ENCODE measurements at regions of chr1 and their contacts with region 1.

Region 1: DNA sequence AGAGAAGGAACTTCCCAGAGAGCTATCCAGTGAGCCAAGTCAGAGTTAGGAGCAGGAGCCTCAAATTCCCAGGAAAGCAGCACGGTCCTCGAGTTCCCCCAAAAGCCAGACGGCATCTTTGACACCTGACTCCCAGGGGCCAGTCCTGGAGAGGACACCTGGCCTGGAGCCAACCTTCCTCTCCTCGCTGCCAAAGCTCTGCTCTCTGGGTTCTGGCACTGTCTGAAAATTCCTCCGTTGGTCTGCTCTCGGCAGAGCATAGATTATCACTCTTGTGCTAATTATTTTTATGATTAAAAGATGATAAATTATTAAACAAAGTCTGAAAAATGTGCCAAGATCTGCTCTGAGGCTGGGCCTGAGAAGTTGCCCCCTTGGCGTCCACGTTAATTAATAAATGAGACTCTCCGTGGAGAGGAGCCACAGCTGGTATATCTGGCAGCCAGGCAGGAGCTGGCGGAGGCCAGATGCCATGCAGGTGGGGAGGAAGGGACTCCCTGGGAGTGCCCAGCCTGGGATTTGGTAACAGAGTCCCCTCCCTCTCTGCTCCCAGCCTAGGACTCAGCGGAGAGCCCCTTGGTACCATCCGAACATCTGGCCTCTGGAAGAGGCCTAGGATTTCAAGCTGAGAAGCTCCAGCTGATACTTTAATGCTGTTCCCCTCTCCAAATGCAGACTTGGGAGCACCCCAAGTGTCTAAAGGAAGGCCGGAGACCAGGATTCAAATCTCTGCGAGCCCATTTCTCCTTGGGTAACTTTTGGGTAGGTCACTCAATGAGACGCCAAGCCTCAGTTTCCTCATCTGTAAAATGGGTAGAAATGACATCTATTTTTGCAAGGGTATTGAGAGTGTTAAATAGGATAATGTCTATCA is 163.7 kb upstream of the POU3F1 start:
- DNase-seq: no peak

Region 2: GRCh38 chr1:38191461-38191860 is 18.8 kb before region 1 on chr1:
- intact Hi-C with region 1: no loop called
- DNase-seq: no peak

Region 3: DNA sequence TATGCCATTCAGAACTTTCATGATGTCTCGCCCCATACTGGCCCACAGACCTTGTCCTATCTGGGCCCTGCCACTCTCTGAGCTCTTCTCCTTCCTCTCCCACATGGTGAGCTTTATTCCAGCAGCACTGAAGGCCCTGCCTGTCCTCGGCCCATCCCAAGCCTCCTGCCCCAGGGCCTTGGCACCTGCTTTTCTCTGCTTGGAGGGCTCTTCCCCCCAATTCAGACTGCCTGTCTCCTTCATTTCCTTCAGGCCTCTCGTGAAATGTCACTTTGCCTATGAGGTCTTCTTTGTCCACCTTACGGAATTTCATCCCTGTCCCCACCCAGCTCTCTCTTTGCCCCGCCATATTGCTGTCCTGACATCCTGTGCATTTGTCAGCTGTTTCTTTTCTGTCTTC is 28.0 kb after region 1 on chr1:
- intact Hi-C with region 1: loop called in 1 of 2 experiments (anchors 1 kb)
- DNase-seq: no peak

Region 4: DNA sequence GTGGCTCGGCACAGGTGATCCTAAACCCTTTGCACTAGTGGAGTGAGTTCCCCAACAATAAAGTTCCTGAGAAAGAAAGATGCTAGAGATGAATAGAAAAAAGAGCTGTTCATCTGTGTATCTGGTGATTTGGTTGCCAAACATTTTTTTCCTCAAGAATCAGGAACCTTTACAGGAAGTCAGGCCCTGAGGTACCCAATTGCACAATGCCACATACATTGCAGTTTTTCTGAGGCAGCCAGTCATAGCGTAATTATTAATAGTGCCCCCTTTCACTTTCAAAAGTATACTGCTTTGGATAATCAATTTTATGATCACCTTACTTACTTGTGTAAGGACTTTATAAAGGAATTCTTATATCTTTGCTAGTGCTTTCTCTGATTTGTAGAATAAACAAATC is 182.6 kb after region 1 on chr1:
- intact Hi-C with region 1: no loop called
- DNase-seq: no peak

Measured in posterior vena cava (tissue), 2 donors.